IMR-90 (cell line): ENCODE measurements at regions of chr3 and their contacts with region 1.

Region 1: DNA sequence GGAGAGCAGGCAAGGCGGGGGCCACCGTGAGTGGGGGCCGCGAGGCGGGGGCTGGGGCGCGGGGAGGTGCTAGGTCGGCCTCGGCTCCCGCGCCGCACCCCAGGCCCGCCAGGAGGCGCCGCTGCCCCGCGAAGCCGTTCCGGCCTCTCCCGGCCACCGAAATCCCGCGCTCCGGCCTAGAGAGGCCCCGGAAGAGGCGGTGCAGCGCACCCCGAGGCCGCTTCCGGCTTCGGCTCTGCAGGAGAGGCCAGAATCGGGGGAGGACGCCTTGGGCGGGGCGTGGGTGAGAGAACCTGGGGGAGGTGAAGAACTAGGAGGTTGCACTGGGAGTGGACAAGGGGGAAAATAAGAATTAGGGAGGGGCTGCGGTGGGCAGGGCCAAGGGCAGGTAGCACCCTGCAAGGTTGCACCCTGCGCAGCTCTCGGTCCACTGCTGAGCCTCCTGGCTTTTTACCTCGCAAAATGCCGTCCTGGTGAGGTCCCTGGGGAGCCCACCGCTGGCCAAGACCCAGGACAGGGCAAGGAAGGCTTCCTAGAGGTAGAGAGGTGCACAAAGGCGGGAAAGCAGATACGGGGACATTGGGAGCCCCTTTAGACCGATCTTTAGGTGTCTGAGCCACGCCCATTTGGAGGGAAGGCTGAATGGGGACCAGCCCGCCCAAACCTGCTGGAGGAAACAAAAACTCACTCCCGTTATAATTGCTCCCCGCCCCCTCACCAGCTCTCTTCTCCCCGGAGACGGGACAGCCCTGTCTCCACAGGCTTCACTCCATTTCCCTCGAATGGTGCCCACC is 8.4 kb upstream of the GNAI2 start:
- DNase-seq: peak; percentile 80
- ATAC-seq: peak; percentile 90
- H3K4me3 ChIP-seq: peak overlapping the region; percentile 82
- H3K27ac ChIP-seq: peak overlapping the region; percentile 81
- H3K4me1 ChIP-seq: peaks cover 7% of the 10 kb centered on the region
- H3K27me3 ChIP-seq: peaks cover 3% of the 10 kb centered on the region; the same call in 1 of the 2 replicates
- CTCF ChIP-seq: peak; percentile 91
- POLR2A ChIP-seq: peak; percentile 47; the same call in 1 of the 2 replicates
- RAD21 ChIP-seq: peak; percentile 94

Region 2: GRCh38 chr3:50121416-50122032 is 106.1 kb before region 1 on chr3:
- CTCF ChIA-PET with region 1: interaction called, 3 read pairs
- POLR2A ChIA-PET with region 1: no interaction called
- dilution Hi-C with region 1: no loop called
- in situ Hi-C with region 1: no loop called
- intact Hi-C with region 1: loop called (anchors 1 kb)
- DNase-seq: peak; percentile 79
- ATAC-seq: peak; percentile 70
- H3K4me3 ChIP-seq: no peak overlapping the region
- H3K27ac ChIP-seq: no peak overlapping the region
- H3K4me1 ChIP-seq: peaks cover 21% of the 10 kb centered on the region
- H3K27me3 ChIP-seq: no peaks in the 10 kb centered on the region
- CTCF ChIP-seq: peak; percentile 87
- POLR2A ChIP-seq: peak; percentile 26; the same call in 1 of the 2 replicates
- RAD21 ChIP-seq: peak; percentile 95

Region 3: DNA sequence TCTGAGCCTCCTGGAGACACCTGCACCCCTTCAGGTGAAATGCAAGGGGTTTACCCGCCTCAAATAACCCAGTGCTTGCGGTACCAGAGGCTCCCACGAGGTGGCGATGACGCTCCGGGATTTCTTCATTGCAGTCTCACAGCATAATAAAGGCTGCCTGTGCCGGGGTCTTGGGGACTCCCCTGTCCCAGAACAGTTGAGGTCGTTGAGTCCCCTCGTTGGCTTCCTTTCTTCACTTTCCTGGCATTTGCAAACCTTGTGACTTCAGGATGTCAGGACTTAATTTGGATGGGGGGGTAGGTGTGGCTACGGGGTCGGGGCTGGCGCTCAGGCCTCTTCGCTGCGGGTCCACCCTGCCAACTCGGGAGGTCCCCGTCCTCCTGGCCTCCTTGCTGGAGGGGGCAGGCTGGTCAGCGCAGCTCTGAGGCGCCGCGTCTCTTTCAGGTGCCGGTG is 34.9 kb before region 1 on chr3:
- CTCF ChIA-PET with region 1: interaction called, 22 read pairs
- POLR2A ChIA-PET with region 1: no interaction called
- dilution Hi-C with region 1: no loop called
- in situ Hi-C with region 1: loop called (anchors 5 kb)
- intact Hi-C with region 1: loop called (anchors 1 kb)
- DNase-seq: peak; percentile 40
- ATAC-seq: peak; percentile 63
- H3K4me3 ChIP-seq: no peak overlapping the region
- H3K27ac ChIP-seq: no peak overlapping the region
- H3K4me1 ChIP-seq: no peaks in the 10 kb centered on the region
- H3K27me3 ChIP-seq: peaks cover 29% of the 10 kb centered on the region
- CTCF ChIP-seq: peak; percentile 89
- POLR2A ChIP-seq: no peak
- RAD21 ChIP-seq: peak; percentile 89

Region 4: GRCh38 chr3:50272911-50273693 is 45.5 kb after region 1 on chr3:
- CTCF ChIA-PET with region 1: interaction called, 5 read pairs
- POLR2A ChIA-PET with region 1: no interaction called
- dilution Hi-C with region 1: no loop called
- in situ Hi-C with region 1: loop called (anchors 5 kb)
- intact Hi-C with region 1: loop called (anchors 1 kb)
- DNase-seq: peak; percentile 62
- ATAC-seq: peak; percentile 70
- H3K4me3 ChIP-seq: peak overlapping the region; percentile 7; the same call in 1 of the 2 replicates
- H3K27ac ChIP-seq: no peak overlapping the region
- H3K4me1 ChIP-seq: peaks cover 30% of the 10 kb centered on the region
- H3K27me3 ChIP-seq: no peaks in the 10 kb centered on the region
- CTCF ChIP-seq: peak; percentile 98
- POLR2A ChIP-seq: peak; percentile 58; the same call in 1 of the 2 replicates
- RAD21 ChIP-seq: peak; percentile 99

Region 5: GRCh38 chr3:50481992-50482391 is 254.4 kb after region 1 on chr3:
- CTCF ChIA-PET with region 1: no interaction called
- POLR2A ChIA-PET with region 1: no interaction called
- dilution Hi-C with region 1: no loop called
- in situ Hi-C with region 1: no loop called
- intact Hi-C with region 1: no loop called
- DNase-seq: no peak
- ATAC-seq: no peak
- H3K4me3 ChIP-seq: no peak overlapping the region
- H3K27ac ChIP-seq: no peak overlapping the region
- H3K4me1 ChIP-seq: no peaks in the 10 kb centered on the region
- H3K27me3 ChIP-seq: peaks cover 34% of the 10 kb centered on the region
- CTCF ChIP-seq: no peak
- POLR2A ChIP-seq: no peak
- RAD21 ChIP-seq: no peak

Region 6: DNA sequence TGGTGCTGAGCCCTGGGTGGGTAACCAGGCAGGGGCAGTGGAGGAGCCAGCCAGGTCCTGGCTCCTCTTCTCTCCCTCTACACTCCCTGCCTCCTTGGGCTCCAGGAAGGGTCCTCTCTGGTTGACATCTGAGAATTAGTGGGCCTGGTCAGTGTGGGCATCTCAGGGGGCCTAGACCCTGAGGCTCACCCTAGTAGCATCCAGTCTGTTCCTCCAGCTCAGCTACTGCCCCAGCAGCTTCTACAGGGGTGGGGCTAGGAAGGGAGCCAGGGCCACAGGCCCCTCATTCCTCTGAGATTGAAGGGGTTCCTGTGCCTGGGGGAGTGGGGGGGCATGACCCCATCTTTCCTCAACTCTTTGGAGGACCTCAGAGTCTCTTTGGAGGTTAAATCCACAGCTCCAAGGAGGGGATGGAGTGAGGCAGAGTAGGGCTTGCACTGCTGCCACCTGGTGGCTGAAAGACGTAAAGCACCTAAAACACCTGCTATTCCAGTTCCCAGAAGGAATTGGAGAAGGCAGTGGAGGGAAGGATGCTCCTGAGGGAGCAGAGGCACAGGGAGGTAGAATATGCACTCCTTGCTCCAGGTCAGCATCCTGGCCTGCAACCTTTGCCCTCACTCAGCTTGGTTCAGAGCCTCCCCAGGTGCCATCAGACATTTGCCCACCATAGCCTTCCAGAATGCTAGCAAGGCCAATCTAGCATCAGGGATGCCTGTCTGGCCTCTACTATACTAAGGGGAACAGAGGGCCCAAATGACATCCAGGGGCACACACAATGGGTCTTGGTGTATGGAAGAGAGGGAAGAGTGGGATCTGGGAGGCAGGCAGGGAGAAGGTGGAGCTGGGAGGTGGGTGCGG is 314.8 kb after region 1 on chr3:
- CTCF ChIA-PET with region 1: no interaction called
- POLR2A ChIA-PET with region 1: no interaction called
- dilution Hi-C with region 1: no loop called
- in situ Hi-C with region 1: no loop called
- intact Hi-C with region 1: loop called (anchors 5 kb)
- DNase-seq: peak; percentile 52
- ATAC-seq: peak; percentile 91
- H3K4me3 ChIP-seq: no peak overlapping the region
- H3K27ac ChIP-seq: no peak overlapping the region
- H3K4me1 ChIP-seq: no peaks in the 10 kb centered on the region
- H3K27me3 ChIP-seq: peaks cover 40% of the 10 kb centered on the region
- CTCF ChIP-seq: peak; percentile 81
- POLR2A ChIP-seq: no peak
- RAD21 ChIP-seq: peak; percentile 80